Activated T-helper 1 cell treated with anti-CD3 and anti-CD28 coated beads, Interleukin-12 subunit alpha, Interleukin-12 subunit beta, Interleukin-2, Interleukin-4 antibody, amounts not matched to agents 30 ng/mL and 10 ng/mL and 1 ng/mL, durations not matched to agents 14 hours and 24 hours and 36 hours (primary cell): ENCODE measurements at regions of chr22 and their contacts with region 1.

Region 1: DNA sequence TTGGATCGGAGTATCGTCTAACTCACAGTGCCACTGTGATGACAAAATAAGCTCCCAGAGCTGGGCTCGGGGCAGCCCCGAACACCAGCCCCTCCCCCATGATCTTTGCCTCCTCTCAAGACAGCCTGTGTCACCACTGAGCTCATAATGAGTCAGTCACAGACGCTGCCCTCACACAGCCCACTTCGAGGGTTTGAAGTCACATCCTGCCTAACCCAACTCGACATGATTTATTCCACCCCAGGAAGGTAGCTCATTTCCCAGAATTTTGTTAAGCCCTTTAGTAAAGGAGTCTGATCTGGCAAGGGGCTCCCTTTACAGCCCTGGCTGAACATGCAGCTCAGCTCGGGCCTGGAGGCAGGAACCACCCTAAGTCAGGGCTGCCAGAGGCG is 22.8 kb downstream of the MYH9 start:
- DNase-seq: peak; percentile 84
- H3K4me3 Mint-ChIP-seq: peak overlapping the region; percentile 71
- H3K27ac Mint-ChIP-seq: peak overlapping the region; percentile 95
- H3K4me1 Mint-ChIP-seq: peaks cover 93% of the 10 kb centered on the region
- H3K27me3 Mint-ChIP-seq: no peaks in the 10 kb centered on the region

Region 2: DNA sequence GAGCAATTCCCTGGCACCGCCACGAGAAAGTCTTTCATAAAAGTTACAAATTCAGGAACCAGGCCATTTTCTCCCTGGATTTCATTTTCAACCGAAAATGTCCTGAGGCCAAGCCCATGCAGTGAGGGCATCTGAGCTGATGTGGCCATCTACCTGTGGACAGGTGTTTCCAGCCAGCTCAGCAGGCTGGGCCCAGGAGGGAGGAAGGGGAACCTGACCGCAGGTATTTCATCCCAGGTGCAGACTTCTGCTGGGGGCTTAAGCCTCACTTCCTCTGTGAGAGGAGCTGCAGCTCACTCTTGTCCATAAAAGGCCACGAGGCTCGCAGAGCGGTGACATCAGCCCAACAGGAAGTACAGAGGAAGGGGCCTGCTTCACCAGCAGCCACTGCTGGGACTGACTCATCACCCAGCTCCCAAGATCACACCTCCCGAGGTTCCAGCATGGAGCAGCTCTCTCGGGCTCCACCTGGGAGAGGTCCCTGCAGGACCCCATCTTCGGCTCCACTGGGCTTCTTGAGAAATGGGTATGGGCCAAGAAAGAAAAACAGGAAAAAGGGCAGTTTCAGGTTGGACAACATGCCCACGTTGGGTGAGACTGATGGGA is 33.6 kb before region 1 on chr22:
- intact Hi-C with region 1: loop called (anchors 1 kb)
- DNase-seq: peak; percentile 77
- H3K4me3 Mint-ChIP-seq: peak overlapping the region; percentile 86
- H3K27ac Mint-ChIP-seq: peak overlapping the region; percentile 98
- H3K4me1 Mint-ChIP-seq: peaks cover 99% of the 10 kb centered on the region
- H3K27me3 Mint-ChIP-seq: no peaks in the 10 kb centered on the region

Region 3: DNA sequence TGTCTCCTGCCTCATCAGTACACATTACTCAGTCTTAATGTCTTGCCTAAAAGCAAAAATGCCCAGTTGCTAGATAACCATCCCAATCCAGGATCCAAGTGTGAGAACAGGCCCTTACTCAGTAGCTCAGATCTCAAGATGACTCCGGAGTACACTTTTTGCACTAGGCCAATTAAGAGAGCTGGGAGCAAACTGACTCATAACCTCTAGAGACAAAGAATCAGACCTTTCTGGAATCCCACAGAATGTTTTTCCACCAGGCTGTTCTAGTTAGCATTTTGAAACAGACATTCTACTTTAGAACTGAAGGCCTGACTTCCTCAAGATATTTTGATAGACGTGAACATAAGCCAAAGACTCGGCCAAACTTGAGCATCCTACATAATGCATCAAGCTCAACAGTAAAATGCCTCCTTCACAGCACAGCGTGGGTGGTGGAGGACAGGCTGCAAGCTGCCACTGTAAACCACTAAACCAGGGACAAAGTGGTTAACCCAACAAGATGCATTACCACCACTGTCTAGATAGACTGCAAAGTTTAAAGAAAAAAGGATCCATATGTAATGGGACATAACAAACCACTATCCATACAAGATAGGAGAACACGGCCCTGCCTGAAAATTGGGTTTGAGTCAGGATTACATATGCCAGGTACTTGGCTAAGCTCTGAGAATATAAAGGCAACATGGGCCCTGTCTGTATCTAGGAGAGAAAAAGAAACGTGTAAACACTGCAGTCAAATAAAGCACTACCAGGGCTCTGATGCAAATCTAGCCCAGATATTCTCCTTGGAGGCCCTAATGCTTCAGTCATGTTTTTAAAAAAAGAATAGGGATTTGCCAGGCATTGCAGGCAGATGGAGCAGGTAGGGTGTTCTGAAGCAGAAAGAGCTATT is 25.6 kb before region 1 on chr22:
- intact Hi-C with region 1: loop called (anchors 1 kb)
- DNase-seq: peak; percentile 32
- H3K4me3 Mint-ChIP-seq: peak overlapping the region; percentile 58
- H3K27ac Mint-ChIP-seq: peak overlapping the region; percentile 92
- H3K4me1 Mint-ChIP-seq: peaks cover 90% of the 10 kb centered on the region
- H3K27me3 Mint-ChIP-seq: no peaks in the 10 kb centered on the region

Region 4: GRCh38 chr22:36352803-36353507 is 12.1 kb before region 1 on chr22:
- intact Hi-C with region 1: loop called (anchors 1 kb)
- DNase-seq: no peak
- H3K4me3 Mint-ChIP-seq: no peak overlapping the region
- H3K27ac Mint-ChIP-seq: peak overlapping the region; percentile 86
- H3K4me1 Mint-ChIP-seq: peaks cover 85% of the 10 kb centered on the region
- H3K27me3 Mint-ChIP-seq: no peaks in the 10 kb centered on the region

Region 5: GRCh38 chr22:36377022-36377631 is 12.1 kb after region 1 on chr22:
- intact Hi-C with region 1: loop called (anchors 1 kb)
- DNase-seq: peak; percentile 52
- H3K4me3 Mint-ChIP-seq: peak overlapping the region; percentile 87
- H3K27ac Mint-ChIP-seq: peak overlapping the region; percentile 99
- H3K4me1 Mint-ChIP-seq: peaks cover 91% of the 10 kb centered on the region
- H3K27me3 Mint-ChIP-seq: no peaks in the 10 kb centered on the region